ENCODE measurements at regions of chr3 and their contacts with region 1.

Region 1: GRCh38 chr3:133531981-133532380 is 41.5 kb upstream of the CDV3 start:
- DNase-seq: peak; percentile 67
- H3K4me3 ChIP-seq: no peak overlapping the region
- H3K27ac ChIP-seq: peak overlapping the region; percentile 49
- H3K4me1 ChIP-seq: peaks cover 21% of the 10 kb centered on the region
- H3K27me3 ChIP-seq: no peaks in the 10 kb centered on the region
- CTCF ChIP-seq: no peak
- POLR2A ChIP-seq: no peak

Region 2: DNA sequence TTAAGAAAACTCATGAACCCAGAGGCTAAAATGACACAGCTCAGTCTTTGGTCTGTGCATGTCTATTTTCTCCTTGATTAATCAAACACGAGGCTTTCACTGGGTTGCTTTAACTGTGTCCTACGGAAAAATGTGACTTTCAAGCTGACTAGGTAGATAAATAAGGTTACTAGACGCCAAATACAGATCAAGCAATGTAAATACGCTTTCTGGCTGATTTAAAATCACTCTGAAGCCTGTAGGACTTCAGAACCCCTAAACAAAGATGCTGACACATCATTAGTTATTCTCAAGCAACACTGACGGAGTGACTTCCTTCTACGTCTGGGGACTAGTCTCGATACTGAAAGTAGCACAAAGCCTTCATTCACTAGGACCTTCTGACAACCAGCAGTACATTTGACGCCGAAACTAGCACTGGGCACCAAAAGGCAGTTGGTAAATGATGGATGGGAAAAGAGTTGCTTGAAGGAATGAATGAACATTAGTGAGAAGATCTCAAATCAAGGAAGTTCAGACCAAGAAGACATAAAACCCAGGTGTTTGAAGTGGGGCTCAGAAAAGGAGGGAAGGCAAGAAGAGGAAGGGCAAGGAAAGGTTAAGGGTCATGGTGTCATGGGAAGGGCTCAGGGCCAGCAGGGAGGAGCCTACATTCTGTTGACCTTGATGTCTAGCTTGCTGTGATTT is 25.6 kb before region 1 on chr3:
- CTCF ChIA-PET with region 1: interaction called, 7 read pairs
- POLR2A ChIA-PET with region 1: no interaction called
- dilution Hi-C with region 1: no loop called
- intact Hi-C with region 1: loop called (anchors 1 kb)
- DNase-seq: peak; percentile 75
- H3K4me3 ChIP-seq: peak overlapping the region in 1 of 3 experiments; percentile 46
- H3K27ac ChIP-seq: peak overlapping the region; percentile 82
- H3K4me1 ChIP-seq: peaks cover 31% of the 10 kb centered on the region
- H3K27me3 ChIP-seq: no peaks in the 10 kb centered on the region
- CTCF ChIP-seq: no peak
- POLR2A ChIP-seq: no peak

Region 3: DNA sequence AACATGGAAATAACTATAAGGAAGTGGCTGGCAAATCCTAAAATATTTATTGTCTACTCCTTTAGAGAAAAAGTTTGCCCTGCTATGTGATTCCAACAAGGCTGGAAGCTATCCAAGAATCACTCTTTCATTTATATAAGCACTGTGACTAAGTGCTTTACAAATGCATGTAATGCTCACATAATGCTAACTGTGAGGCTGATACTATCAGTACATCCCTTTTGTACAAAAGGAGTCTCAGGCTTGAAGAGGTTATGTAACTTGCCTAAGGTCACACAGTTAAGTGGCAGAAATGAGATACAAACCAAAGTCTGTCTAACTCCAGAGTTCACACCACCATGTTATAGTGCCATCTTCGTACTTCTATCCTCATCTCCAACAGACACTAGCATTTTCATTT is 112.8 kb after region 1 on chr3:
- CTCF ChIA-PET with region 1: no interaction called
- POLR2A ChIA-PET with region 1: no interaction called
- dilution Hi-C with region 1: no loop called
- intact Hi-C with region 1: no loop called
- DNase-seq: peak; percentile 89
- H3K4me3 ChIP-seq: no peak overlapping the region
- H3K27ac ChIP-seq: peak overlapping the region; percentile 36
- H3K4me1 ChIP-seq: peaks cover 37% of the 10 kb centered on the region
- H3K27me3 ChIP-seq: no peaks in the 10 kb centered on the region
- CTCF ChIP-seq: no peak
- POLR2A ChIP-seq: no peak